ENCODE measurements at regions of chr17 and their contacts with region 1.

Region 1: GRCh38 chr17:18960803-18961511 is 9.0 kb downstream of the SLC5A10 start:
- DNase-seq: peak; percentile 77 to 90
- ATAC-seq: peak; percentile 72 to 92
- H3K4me3 ChIP-seq: no peak overlapping the region
- H3K27ac ChIP-seq: peak overlapping the region; percentile 65 to 86
- H3K4me1 ChIP-seq: peaks cover 34% of the 10 kb centered on the region
- CTCF ChIP-seq: peak; percentile 98
- EP300 ChIP-seq: no peak
- POLR2A ChIP-seq: no peak
- RAD21 ChIP-seq: peak; percentile 99

Region 2: GRCh38 chr17:18626152-18626870 is 334.6 kb before region 1 on chr17:
- CTCF ChIA-PET with region 1: interaction called, 14 read pairs
- POLR2A ChIA-PET with region 1: no interaction called
- DNase-seq: peak in 1 of 2 experiments; percentile 5
- ATAC-seq: no peak
- H3K4me3 ChIP-seq: peak overlapping the region; percentile 11; the same call in 1 of the 3 replicates
- H3K27ac ChIP-seq: 0 out of 6 replicates have a peak overlapping the region, but pooled peaks of 1 of the 2 experiments have one; percentile 24
- H3K4me1 ChIP-seq: no peaks in the 10 kb centered on the region
- CTCF ChIP-seq: no peak
- EP300 ChIP-seq: no peak
- POLR2A ChIP-seq: no peak
- RAD21 ChIP-seq: no peak

Region 3: GRCh38 chr17:18896146-18896545 is 64.8 kb before region 1 on chr17:
- CTCF ChIA-PET with region 1: interaction called, 13 read pairs
- POLR2A ChIA-PET with region 1: no interaction called
- DNase-seq: no peak
- ATAC-seq: no peak
- H3K4me3 ChIP-seq: no peak overlapping the region
- H3K27ac ChIP-seq: no peak overlapping the region
- H3K4me1 ChIP-seq: no peaks in the 10 kb centered on the region
- CTCF ChIP-seq: no peak
- EP300 ChIP-seq: no peak
- POLR2A ChIP-seq: no peak
- RAD21 ChIP-seq: no peak

Region 4: GRCh38 chr17:18933102-18934058 is 27.6 kb before region 1 on chr17:
- CTCF ChIA-PET with region 1: interaction called, 28 read pairs
- POLR2A ChIA-PET with region 1: no interaction called
- DNase-seq: no peak
- ATAC-seq: peak; percentile 53 to 64; a peak in 5 of 6 replicates
- H3K4me3 ChIP-seq: no peak overlapping the region
- H3K27ac ChIP-seq: no peak overlapping the region
- H3K4me1 ChIP-seq: no peaks in the 10 kb centered on the region
- CTCF ChIP-seq: no peak
- EP300 ChIP-seq: no peak
- POLR2A ChIP-seq: no peak
- RAD21 ChIP-seq: no peak

Region 5: DNA sequence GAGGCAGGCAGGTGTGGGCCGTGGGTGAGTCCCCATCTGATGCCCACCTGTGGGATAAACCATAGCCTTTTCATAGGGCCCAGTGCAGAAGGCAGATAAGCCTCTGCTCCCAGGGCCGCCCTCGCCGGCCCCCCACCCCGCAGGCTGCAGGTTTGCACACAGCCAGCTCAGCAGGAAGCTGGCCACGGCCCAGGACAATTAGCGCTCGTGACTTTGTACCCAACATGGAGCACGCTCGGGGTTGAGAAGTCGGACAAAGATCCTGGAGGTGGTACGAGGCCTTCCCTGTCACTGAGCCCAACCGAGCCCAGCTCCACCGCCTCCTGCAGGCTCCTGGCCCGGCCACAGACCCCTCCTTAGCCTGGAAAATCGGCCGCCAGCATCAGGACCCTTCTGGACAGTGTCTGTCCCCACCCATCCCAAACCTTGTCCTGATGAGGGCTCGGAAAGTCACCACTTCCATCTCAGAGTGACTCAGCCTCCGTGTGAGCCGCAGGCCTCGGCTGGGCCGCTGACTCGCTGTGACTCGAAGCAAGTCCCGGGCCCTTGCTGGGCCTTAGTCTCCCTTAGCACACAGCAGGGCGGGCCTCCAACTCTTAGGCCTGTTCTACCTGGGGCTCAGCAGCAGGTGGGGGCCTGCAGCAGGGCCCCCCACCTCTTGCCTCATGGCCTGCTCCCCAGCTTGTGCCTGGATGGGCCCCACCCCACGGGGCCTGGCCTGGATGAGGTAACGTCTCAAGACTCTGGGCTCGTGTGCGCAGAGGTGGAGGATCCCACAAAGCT is 20.9 kb after region 1 on chr17:
- CTCF ChIA-PET with region 1: interaction called, 215 read pairs
- POLR2A ChIA-PET with region 1: no interaction called
- DNase-seq: peak; percentile 76 to 82
- ATAC-seq: peak; percentile 65 to 75
- H3K4me3 ChIP-seq: no peak overlapping the region
- H3K27ac ChIP-seq: peak overlapping the region; percentile 72 to 88
- H3K4me1 ChIP-seq: peaks cover 24% of the 10 kb centered on the region
- CTCF ChIP-seq: no peak
- EP300 ChIP-seq: no peak
- POLR2A ChIP-seq: no peak
- RAD21 ChIP-seq: no peak

Region 6: DNA sequence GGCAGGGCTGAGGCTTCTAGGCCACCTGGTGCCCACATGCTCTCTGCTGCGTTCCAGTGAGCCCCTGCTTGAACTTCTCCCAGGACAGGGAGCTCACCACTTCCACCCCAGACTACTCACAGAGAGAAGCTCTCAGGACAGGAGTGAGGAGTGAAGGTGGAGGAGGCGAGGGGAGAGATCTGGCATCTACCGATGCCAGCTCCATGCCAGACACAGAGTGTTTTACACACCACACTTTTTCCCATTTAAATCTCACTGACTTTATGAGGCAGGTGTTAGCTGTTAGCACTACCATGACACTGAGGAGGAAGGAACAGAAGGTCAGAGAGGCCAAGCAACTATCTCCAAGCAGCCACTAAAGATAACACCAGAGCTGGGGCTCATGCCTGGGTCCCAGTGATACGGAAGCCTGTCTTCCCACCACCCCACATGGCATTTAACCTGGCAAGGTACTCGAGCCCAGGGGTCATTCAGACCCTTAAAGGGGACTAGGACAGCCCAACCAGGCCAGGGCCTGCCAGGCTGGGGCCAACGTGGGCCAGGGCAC is 36.8 kb after region 1 on chr17:
- CTCF ChIA-PET with region 1: interaction called, 38 read pairs
- POLR2A ChIA-PET with region 1: no interaction called
- DNase-seq: no peak
- ATAC-seq: no peak
- H3K4me3 ChIP-seq: no peak overlapping the region
- H3K27ac ChIP-seq: no peak overlapping the region
- H3K4me1 ChIP-seq: peaks cover 19% of the 10 kb centered on the region
- CTCF ChIP-seq: no peak
- EP300 ChIP-seq: no peak
- POLR2A ChIP-seq: no peak
- RAD21 ChIP-seq: no peak

Region 7: GRCh38 chr17:19019036-19019941 is 58.3 kb after region 1 on chr17:
- CTCF ChIA-PET with region 1: interaction called, 110 read pairs
- POLR2A ChIA-PET with region 1: no interaction called
- DNase-seq: no peak
- ATAC-seq: no peak
- H3K4me3 ChIP-seq: no peak overlapping the region
- H3K27ac ChIP-seq: 0 out of 6 replicates have a peak overlapping the region, but pooled peaks of 1 of the 2 experiments have one; percentile 5
- H3K4me1 ChIP-seq: peaks cover 6% of the 10 kb centered on the region; the same call in 2 of the 3 replicates
- CTCF ChIP-seq: no peak
- EP300 ChIP-seq: no peak
- POLR2A ChIP-seq: no peak
- RAD21 ChIP-seq: no peak

Measured in A549 (cell line).